Gastrocnemius medialis (tissue), 4 donors: ENCODE measurements at regions of chr11 and their contacts with region 1.

Region 1: GRCh38 chr11:112655371-112655770 is 305.8 kb upstream of the NCAM1 start:
- DNase-seq: peak; percentile 75 to 85
- ATAC-seq: peak in 1 of 2 donors; percentile 10
- H3K4me3 ChIP-seq: no peak overlapping the region
- H3K27ac ChIP-seq: peak overlapping the region in 2 of 4 donors; percentile 28 to 88
- H3K4me1 ChIP-seq: peaks cover 69 to 72% of the 10 kb centered on the region in 2 donors
- H3K27me3 ChIP-seq: no peaks in the 10 kb centered on the region
- CTCF ChIP-seq: no peak
- POLR2A ChIP-seq: no peak

Region 2: DNA sequence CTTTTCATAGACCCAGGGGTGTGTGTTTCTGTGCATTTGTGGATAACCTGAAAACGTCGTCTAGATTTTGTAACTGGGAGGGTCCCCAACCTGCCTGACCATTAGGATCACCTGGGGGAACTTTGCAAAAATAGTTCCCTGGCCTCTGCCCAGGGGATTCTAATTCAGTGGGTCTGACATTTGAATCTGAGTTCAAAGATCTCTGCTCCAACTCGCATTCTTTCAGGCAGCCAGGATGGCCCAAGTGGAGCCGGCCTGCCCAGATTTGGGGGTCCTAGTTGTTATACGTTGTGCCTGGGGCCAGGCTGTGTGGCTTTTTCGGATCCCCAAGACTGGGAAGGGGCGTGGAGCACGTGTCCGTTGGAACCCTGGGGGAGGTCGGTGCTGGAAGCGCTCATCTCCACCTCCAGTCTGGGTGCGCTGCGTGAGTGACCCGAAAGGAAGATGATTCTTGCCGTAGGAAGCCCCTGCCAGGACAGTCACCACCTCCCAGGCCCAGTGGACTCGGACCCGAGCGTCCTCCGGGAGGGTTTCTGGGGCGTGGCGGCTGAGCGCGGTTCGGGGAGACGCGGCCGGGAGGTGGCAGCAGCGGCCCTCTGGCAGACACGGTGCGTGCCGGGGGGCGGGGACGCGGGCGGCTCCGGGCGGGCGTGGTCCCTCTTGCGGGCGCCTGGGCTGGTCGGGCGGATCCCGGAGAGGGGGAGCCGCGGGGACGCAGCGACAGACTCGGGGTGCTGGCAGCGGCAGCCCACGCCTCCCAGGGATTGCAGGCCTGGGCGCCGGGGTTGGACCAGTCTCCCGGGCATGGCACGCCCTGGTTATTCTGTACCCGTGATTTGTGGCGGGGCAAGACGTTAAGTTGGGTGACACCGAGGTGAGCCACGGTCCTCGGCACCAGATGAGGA is 365.5 kb before region 1 on chr11:
- in situ Hi-C with region 1: no loop called
- intact Hi-C with region 1: loop called (anchors 2 kb)
- DNase-seq: peak; percentile 63 to 67
- ATAC-seq: peak; percentile 63 to 70
- H3K4me3 ChIP-seq: peak overlapping the region; percentile 61 to 77 (median 68)
- H3K27ac ChIP-seq: peak overlapping the region; percentile 71 to 85 (median 82)
- H3K4me1 ChIP-seq: peaks cover 42 to 44% of the 10 kb centered on the region in 2 donors
- H3K27me3 ChIP-seq: no peaks in the 10 kb centered on the region
- CTCF ChIP-seq: peak; percentile 79 to 96 (median 84)
- POLR2A ChIP-seq: peak; percentile 23 to 40

Region 3: DNA sequence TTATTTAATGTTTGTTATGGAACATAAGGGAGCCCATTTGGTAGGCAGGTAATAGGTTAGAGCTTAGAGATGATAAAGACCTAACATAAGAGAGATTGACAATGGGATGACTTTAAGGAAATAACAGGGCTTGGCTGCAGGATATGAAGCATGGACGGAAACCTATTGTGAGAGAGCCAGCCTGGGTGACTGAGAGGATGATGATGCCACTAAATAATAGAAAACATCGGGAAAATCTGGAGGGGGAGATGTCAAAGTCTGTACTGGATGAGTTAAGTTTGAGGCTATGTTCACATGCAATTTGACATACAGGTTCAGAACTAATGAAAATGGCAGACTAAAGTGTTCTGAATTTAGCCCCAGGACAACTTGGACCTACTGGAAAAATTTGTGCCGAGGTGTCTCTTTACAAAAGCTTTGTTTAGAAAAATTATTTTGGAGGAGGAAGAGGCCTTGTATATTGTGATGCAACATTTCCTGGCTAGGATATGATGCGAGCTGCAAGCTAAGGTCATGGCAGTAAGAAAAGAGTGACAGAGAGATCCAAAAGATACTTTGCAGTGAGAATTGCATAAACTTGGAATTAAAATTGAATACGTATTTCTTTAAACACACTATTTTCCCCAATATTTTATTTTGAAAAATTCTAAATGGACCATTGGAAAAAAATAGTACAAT is 55.4 kb before region 1 on chr11:
- in situ Hi-C with region 1: loop called in 1 of 4 experiments (anchors 5 kb)
- intact Hi-C with region 1: no loop called
- DNase-seq: no peak
- ATAC-seq: peak; percentile 87 to 92
- H3K4me3 ChIP-seq: no peak overlapping the region
- H3K27ac ChIP-seq: peak overlapping the region in 2 of 4 donors; percentile 39 to 82
- H3K4me1 ChIP-seq: peaks cover 7 to 24% of the 10 kb centered on the region in 2 donors
- H3K27me3 ChIP-seq: no peaks in the 10 kb centered on the region
- CTCF ChIP-seq: no peak
- POLR2A ChIP-seq: no peak

Region 4: GRCh38 chr11:112610494-112610893 is 44.9 kb before region 1 on chr11:
- in situ Hi-C with region 1: no loop called
- intact Hi-C with region 1: no loop called
- DNase-seq: no peak
- ATAC-seq: peak; percentile 57 to 71
- H3K4me3 ChIP-seq: no peak overlapping the region
- H3K27ac ChIP-seq: peak overlapping the region in 1 of 4 donors; percentile 49
- H3K4me1 ChIP-seq: peaks cover 14 to 34% of the 10 kb centered on the region in 2 donors
- H3K27me3 ChIP-seq: no peaks in the 10 kb centered on the region
- CTCF ChIP-seq: no peak
- POLR2A ChIP-seq: no peak

Region 5: DNA sequence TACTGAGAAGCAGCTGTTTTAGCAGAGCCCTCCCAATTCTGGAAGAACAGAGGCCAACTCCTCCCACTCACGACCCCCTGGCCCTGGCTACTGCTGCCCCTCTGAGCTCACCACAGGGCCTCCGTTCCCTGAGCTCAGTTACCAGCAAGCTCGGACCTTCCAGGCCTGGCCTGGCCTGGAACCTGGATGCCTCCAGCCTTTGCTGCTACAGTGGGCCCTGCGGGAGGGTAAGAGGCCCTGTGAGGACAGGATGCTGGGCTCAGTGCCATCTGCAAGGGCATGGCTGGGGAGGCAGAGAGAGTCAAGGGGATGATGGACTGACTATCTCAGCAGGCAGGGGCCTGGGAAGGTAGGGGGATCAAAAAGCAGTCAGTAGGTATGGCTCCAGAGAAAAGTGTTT is 96.0 kb after region 1 on chr11:
- in situ Hi-C with region 1: no loop called
- intact Hi-C with region 1: loop called (anchors 2 kb)
- DNase-seq: no peak
- ATAC-seq: no peak
- H3K4me3 ChIP-seq: no peak overlapping the region
- H3K27ac ChIP-seq: no peak overlapping the region
- H3K4me1 ChIP-seq: peaks cover 9 to 38% of the 10 kb centered on the region in 2 donors
- H3K27me3 ChIP-seq: no peaks in the 10 kb centered on the region
- CTCF ChIP-seq: no peak
- POLR2A ChIP-seq: no peak

Region 6: GRCh38 chr11:112784323-112785073 is 129.1 kb after region 1 on chr11:
- in situ Hi-C with region 1: no loop called
- intact Hi-C with region 1: loop called (anchors 5 kb)
- DNase-seq: peak in 1 of 2 donors; percentile 28
- ATAC-seq: peak in 1 of 2 donors; percentile 31
- H3K4me3 ChIP-seq: peak overlapping the region in 2 of 4 donors; percentile 9 to 10
- H3K27ac ChIP-seq: no peak overlapping the region
- H3K4me1 ChIP-seq: peaks cover 14 to 15% of the 10 kb centered on the region in 2 donors
- H3K27me3 ChIP-seq: no peaks in the 10 kb centered on the region
- CTCF ChIP-seq: no peak
- POLR2A ChIP-seq: no peak

Region 7: GRCh38 chr11:112795142-112795815 is 139.9 kb after region 1 on chr11:
- in situ Hi-C with region 1: no loop called
- intact Hi-C with region 1: loop called (anchors 5 kb)
- DNase-seq: peak in 1 of 2 donors; percentile 64
- ATAC-seq: peak; percentile 76 to 79
- H3K4me3 ChIP-seq: no peak overlapping the region
- H3K27ac ChIP-seq: peak overlapping the region in 2 of 4 donors; percentile 44 to 55
- H3K4me1 ChIP-seq: peaks cover 8 to 24% of the 10 kb centered on the region in 2 donors
- H3K27me3 ChIP-seq: no peaks in the 10 kb centered on the region
- CTCF ChIP-seq: peak; percentile 67 to 82 (median 70)
- POLR2A ChIP-seq: no peak

Region 8: DNA sequence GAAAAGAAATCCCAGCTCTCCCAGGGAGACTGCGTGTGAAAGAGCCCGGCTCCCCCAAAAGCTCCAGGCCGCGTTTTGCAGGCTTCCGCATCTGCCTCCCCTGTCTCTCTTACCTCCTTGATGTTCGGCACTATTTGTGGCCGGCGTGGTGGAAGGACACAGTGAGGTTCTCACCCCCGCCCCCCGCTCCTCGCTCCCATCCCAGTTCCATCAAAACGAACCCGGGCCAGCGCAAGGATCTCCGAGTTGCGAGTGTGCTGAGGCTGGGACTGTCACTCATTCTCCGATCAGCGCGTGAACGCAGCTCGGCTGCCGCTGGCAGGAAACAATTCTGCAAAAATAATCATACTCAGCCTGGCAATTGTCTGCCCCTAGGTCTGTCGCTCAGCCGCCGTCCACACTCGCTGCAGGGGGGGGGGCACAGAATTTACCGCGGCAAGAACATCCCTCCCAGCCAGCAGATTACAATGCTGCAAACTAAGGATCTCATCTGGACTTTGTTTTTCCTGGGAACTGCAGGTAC is 305.8 kb after region 1 on chr11 and contains the start of gene NCAM1:
- in situ Hi-C with region 1: no loop called
- intact Hi-C with region 1: loop called (anchors 5 kb)
- DNase-seq: peak; percentile 43 to 64
- ATAC-seq: peak; percentile 39 to 47
- H3K4me3 ChIP-seq: peak within 1 kb of the TSS; percentile 52 to 65 (median 55)
- H3K27ac ChIP-seq: peak within 1 kb of the TSS in 3 of 4 donors; percentile 10 to 41 (median 18)
- H3K4me1 ChIP-seq: peaks cover 5 to 21% of the 10 kb centered on the region in 2 donors
- H3K27me3 ChIP-seq: peaks cover 8 to 76% (median 44%) of the 10 kb centered on the region in 3 donors
- CTCF ChIP-seq: no peak
- POLR2A ChIP-seq: no peak
- total RNA-seq, gene NCAM1: 12.8 to 27.7 (median 15.7) TPM